Astrocyte of the cerebellum (primary cell): ENCODE measurements at regions of chr12 and their contacts with region 1.

Region 1: DNA sequence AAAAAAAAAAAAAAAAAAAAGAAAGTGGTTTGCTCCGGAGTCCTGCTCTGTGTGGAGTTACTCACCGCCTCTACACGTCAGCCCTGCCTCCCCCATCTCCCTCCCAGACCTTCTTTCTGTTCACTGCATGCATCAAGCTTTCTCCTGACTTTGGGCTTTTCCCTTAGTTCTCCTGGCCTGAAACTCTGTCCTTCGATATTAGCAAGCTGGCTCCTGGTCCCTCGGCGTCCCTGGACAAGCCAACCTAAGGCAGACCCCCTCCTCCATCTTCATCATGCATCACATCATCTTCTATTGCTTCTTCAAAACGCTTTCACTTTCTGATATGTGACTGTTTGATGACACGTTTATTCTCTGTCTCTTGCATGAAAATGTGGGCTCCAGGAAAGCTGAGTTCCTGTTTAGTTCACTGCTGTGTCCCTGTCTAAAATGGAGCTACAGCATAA is 40.6 kb downstream of the SLC15A4 start:
- DNase-seq: no peak
- H3K4me3 ChIP-seq: no peak overlapping the region
- CTCF ChIP-seq: no peak

Region 2: GRCh38 chr12:129909051-129910020 is 1126.2 kb after region 1 on chr12:
- in situ Hi-C with region 1: loop called (anchors 5 kb)
- DNase-seq: no peak
- H3K4me3 ChIP-seq: no peak overlapping the region
- CTCF ChIP-seq: no peak